Vagina (tissue), 2 donors: ENCODE measurements at regions of chr15 and their contacts with region 1.

Region 1: GRCh38 chr15:101251830-101252820 is at the start of gene CHSY1:
- DNase-seq: no peak
- H3K4me3 ChIP-seq: peak within 1 kb of the TSS; percentile 73 to 95
- H3K27ac ChIP-seq: peak within 1 kb of the TSS; percentile 92
- H3K4me1 ChIP-seq: peaks cover 47% of the 10 kb centered on the region
- H3K27me3 ChIP-seq: no peaks in the 10 kb centered on the region
- CTCF ChIP-seq: peak in 2 of 3 experiments; percentile 2 to 22
- POLR2A ChIP-seq: peak in 1 of 2 donors; percentile 92
- total RNA-seq, gene CHSY1: 28.0 TPM

Region 2: DNA sequence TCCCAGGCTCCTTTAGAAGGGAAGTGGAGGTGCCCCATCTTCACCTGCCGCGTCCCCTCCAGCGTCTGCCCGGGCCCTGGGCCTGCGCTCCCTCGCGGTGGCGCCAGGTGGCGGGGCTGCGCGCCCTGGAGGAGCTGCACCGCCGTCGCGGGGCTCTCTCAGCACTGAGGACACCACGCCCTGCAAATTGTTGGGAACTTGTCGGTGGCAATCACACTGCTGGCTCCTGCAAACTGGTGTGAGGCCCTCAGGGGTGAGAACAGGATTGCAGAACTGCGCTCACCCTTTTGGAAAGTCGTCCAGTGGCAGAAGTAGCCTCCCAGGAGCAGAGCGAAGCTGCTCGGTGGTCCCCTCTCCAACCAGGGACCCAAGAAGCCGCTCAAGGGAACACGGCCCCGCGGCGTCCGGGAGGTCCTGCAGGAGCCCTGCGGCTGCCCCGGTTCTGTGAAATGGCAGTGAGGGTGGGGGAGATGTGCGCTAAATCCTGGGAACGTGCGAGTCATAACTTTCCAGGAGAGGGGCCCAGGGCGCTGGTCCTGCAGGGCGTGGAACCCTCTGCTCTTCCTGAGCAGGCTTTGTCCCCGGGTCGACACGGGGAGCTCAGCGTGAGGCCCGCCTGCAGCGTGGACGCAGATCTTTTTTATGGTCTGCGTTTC is 334.0 kb before region 1 on chr15:
- intact Hi-C with region 1: loop called (anchors 10 kb)
- DNase-seq: no peak
- H3K4me3 ChIP-seq: peak overlapping the region; percentile 78 to 83
- H3K27ac ChIP-seq: peak overlapping the region; percentile 88
- H3K4me1 ChIP-seq: peaks cover 35% of the 10 kb centered on the region
- H3K27me3 ChIP-seq: no peaks in the 10 kb centered on the region
- CTCF ChIP-seq: peak; percentile 75 to 91 (median 90)
- POLR2A ChIP-seq: no peak

Region 3: GRCh38 chr15:101115786-101116680 is 136.1 kb before region 1 on chr15:
- intact Hi-C with region 1: no loop called
- DNase-seq: no peak
- H3K4me3 ChIP-seq: no peak overlapping the region
- H3K27ac ChIP-seq: peak overlapping the region; percentile 70
- H3K4me1 ChIP-seq: peaks cover 31% of the 10 kb centered on the region
- H3K27me3 ChIP-seq: no peaks in the 10 kb centered on the region
- CTCF ChIP-seq: no peak
- POLR2A ChIP-seq: no peak